ENCODE measurements at regions of chr3 and their contacts with region 1.

Region 1: DNA sequence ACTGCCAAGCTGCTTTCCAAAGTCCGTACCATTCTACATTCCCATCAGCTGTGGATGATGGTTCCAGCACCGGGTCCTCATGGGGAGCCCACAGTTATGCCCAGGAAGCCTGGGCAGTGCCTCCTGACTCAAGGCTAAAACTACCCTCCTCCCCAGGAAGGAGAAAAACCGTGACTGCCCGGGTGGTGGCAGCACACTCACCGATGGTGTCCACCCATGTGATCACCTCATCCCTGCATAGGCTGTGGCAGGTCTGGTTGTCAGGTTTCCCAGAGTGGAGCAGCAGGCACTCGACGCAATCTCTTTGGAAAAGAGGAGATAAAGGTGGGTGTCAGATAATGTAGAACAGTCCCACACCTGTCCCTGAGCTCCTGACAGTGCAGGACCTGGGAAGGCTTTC is 38.6 kb downstream of the UMPS start:
- DNase-seq: peak in 2 of 3 donors; percentile 52 to 55
- H3K4me3 ChIP-seq: no peak overlapping the region
- H3K27ac ChIP-seq: no peak overlapping the region
- H3K4me1 ChIP-seq: peaks cover 3 to 21% (median 11%) of the 10 kb centered on the region in 4 experiments
- H3K27me3 ChIP-seq: peaks cover 0 to 2% (median 1%) of the 10 kb centered on the region in 5 experiments

Region 2: GRCh38 chr3:124620600-124621063 is 148.2 kb before region 1 on chr3:
- CTCF ChIA-PET with region 1: no interaction called
- POLR2A ChIA-PET with region 1: no interaction called
- DNase-seq: peak; percentile 75 to 89 (median 76)
- H3K4me3 ChIP-seq: no peak overlapping the region
- H3K27ac ChIP-seq: peak overlapping the region in 1 of 2 experiments; percentile 22
- H3K4me1 ChIP-seq: peaks cover 4 to 32% (median 14%) of the 10 kb centered on the region in 4 experiments
- H3K27me3 ChIP-seq: no peaks in the 10 kb centered on the region

Region 3: DNA sequence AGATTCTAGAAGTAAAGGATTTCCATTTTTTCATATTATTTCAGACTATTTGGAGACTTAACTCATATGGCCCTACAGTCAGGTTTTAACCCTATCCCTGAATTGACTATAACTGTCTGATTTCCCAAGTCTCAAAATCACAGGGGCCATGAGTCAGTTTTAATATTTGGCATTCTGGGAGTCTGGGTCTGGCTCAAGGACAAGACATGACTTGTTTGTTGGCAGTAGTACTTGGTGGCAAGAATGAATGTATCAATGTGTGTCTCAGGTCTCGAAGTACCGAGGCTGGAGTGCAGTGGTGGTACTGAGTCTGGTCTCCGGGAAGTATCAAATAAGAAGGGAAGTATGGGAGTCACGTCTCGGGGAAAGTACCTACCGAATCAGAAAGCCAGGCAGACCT is 27.8 kb before region 1 on chr3:
- CTCF ChIA-PET with region 1: no interaction called
- POLR2A ChIA-PET with region 1: no interaction called
- DNase-seq: no peak
- H3K4me3 ChIP-seq: no peak overlapping the region
- H3K27ac ChIP-seq: no peak overlapping the region
- H3K4me1 ChIP-seq: peaks cover 0 to 9% (median 0%) of the 10 kb centered on the region in 4 experiments
- H3K27me3 ChIP-seq: no peaks in the 10 kb centered on the region

Region 4: GRCh38 chr3:124780761-124781475 is 12.1 kb after region 1 on chr3:
- CTCF ChIA-PET with region 1: interaction called, 50 read pairs
- POLR2A ChIA-PET with region 1: no interaction called
- DNase-seq: peak in 2 of 3 donors; percentile 57 to 67
- H3K4me3 ChIP-seq: peak overlapping the region in 1 of 7 experiments; percentile 6
- H3K27ac ChIP-seq: no peak overlapping the region
- H3K4me1 ChIP-seq: peaks cover 0 to 40% (median 28%) of the 10 kb centered on the region in 4 experiments
- H3K27me3 ChIP-seq: peaks cover 0 to 2% (median 0%) of the 10 kb centered on the region in 5 experiments

Region 5: DNA sequence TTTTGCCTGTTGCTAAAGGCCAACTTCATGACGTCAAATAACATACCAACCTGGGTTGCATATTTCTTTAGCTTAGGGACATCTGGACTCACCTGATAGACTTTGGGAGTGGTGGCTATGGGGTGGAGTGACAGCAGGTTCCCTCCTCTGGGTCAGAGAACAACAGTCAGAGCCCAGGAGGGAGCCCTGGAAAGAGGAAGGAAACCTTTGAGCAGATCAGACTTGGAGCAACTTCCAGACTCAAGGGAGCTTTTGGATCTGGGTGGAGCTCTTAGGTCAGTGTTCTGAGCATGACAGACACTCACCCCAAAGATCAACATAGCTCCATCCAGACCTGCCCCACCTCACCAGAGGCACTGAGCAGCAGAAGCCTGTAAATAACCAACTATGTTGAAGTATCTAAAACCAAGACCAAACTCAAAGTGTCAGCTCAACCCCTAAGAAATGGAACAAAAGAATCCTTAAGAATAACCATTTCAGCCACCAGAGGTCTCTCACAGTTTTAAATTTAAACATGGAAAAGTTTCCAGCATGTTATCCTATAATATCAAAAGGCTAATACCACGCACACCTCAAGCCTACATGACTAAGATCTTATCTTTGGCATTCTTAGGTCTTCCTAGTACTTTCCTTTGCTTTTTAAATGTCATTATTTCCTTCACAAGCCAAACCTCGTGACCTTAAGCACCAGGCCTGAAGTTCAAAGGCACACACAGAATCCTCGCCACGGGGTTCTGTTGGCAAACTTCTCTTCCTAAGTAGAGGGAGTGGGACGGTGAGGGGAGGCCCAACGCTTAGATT is 17.8 kb after region 1 on chr3:
- CTCF ChIA-PET with region 1: interaction called, 50 read pairs
- POLR2A ChIA-PET with region 1: no interaction called
- DNase-seq: no peak
- H3K4me3 ChIP-seq: no peak overlapping the region
- H3K27ac ChIP-seq: no peak overlapping the region
- H3K4me1 ChIP-seq: peaks cover 0 to 42% (median 29%) of the 10 kb centered on the region in 4 experiments
- H3K27me3 ChIP-seq: peaks cover 0 to 2% (median 0%) of the 10 kb centered on the region in 5 experiments

Region 6: GRCh38 chr3:124995460-124995994 is 226.7 kb after region 1 on chr3:
- CTCF ChIA-PET with region 1: no interaction called
- POLR2A ChIA-PET with region 1: no interaction called
- DNase-seq: peak; percentile 74 to 89 (median 84)
- H3K4me3 ChIP-seq: peak overlapping the region in 2 of 7 experiments; percentile 12 to 56
- H3K27ac ChIP-seq: no peak overlapping the region
- H3K4me1 ChIP-seq: peaks cover 0 to 6% (median 2%) of the 10 kb centered on the region in 4 experiments
- H3K27me3 ChIP-seq: no peaks in the 10 kb centered on the region